ENCODE measurements at regions of chr11 and their contacts with region 1.

Region 1: GRCh38 chr11:125592305-125593112 is at the start of gene STT3A:
- DNase-seq: peak; percentile 97 to 99
- ATAC-seq: peak; percentile 91 to 98 (median 92)
- H3K4me3 ChIP-seq: peak within 1 kb of the TSS; percentile 81
- H3K4me3 Mint-ChIP-seq: peak within 1 kb of the TSS; percentile 99
- H3K27ac ChIP-seq: peak within 1 kb of the TSS; percentile 97
- H3K27ac Mint-ChIP-seq: peak within 1 kb of the TSS; percentile 99 to 100
- H3K4me1 ChIP-seq: peaks cover 20% of the 10 kb centered on the region
- H3K4me1 Mint-ChIP-seq: peaks cover 41 to 52% of the 10 kb centered on the region in 2 donors
- H3K27me3 ChIP-seq: no peaks in the 10 kb centered on the region
- H3K27me3 Mint-ChIP-seq: no peaks in the 10 kb centered on the region
- CTCF ChIP-seq: no peak
- total RNA-seq, gene STT3A: 56.7 to 63.5 (median 62.6) TPM

Region 2: DNA sequence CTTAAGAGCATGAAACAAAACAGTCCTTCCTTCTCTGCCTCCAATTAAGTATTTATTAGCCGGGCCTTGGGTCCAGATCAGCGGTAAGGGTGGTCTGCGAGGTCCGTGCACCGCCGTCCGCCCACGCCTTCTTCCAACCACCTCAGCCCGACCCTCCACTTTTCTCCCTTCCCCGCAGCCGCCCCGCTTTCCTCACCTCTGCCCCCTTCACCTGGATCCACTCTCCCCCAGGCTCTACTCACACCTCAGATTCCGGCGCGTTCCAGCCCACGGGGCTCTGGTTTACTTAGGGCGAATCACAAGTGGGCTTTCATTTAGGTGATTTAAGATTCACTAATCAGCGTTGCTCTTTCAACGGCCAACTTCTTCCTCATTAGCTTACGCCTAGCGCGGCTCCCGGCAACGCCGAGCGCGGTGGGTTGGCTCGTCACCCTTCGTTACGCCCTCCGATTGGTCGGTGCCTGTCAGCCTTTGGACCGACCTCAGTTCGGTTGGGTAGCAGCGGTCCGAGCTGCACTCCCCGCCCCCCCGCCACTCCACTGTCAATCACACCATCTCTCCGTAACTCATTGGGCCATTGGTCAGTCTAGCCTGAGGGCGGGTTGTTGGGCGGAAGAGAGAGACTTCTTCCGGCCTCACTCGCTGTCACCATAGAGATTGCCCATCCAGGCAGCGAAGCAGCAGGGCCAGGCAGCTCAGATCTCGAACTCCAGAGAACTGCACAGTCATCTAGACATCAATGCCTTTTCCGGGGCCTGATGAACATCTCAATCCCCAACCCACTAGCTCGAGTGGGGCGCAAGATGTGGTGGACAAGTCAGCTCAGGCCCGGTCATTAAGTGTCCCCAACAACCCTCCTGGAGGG is 480.9 kb before region 1 on chr11 and contains the start of gene TMEM218:
- intact Hi-C with region 1: loop called (anchors 10 kb)
- DNase-seq: peak; percentile 90 to 98
- ATAC-seq: peak; percentile 92 to 98 (median 95)
- H3K4me3 ChIP-seq: peak within 1 kb of the TSS; percentile 82
- H3K4me3 Mint-ChIP-seq: peak within 1 kb of the TSS; percentile 99
- H3K27ac ChIP-seq: peak within 1 kb of the TSS; percentile 84
- H3K27ac Mint-ChIP-seq: peak within 1 kb of the TSS; percentile 95 to 99
- H3K4me1 ChIP-seq: peaks cover 14% of the 10 kb centered on the region
- H3K4me1 Mint-ChIP-seq: peaks cover 17 to 23% of the 10 kb centered on the region in 2 donors
- H3K27me3 ChIP-seq: no peaks in the 10 kb centered on the region
- H3K27me3 Mint-ChIP-seq: peaks cover 0 to 9% of the 10 kb centered on the region in 2 donors
- CTCF ChIP-seq: no peak
- total RNA-seq, gene TMEM218: 10.0 to 14.2 (median 12.1) TPM

Region 3: DNA sequence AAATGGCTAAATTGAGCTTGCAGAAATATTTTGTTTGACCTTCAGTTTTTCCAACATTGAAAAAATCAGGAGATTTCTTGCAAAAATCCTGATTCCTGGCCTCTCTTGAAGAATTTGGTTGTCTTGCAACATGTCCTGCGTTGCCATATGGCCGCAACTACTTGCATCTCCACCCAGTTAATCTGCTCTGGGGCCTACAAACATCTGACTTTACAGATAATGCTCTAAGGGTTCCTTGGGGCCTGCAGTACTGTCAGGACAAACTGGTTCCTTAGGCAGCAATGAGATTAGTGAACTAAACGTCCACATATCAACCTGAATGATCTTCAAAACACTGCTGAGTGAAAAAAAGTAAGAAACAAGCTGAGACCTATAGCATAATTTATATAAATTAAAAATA is 59.8 kb before region 1 on chr11:
- intact Hi-C with region 1: no loop called
- DNase-seq: no peak
- ATAC-seq: no peak
- H3K4me3 ChIP-seq: no peak overlapping the region
- H3K4me3 Mint-ChIP-seq: no peak overlapping the region
- H3K27ac ChIP-seq: no peak overlapping the region
- H3K27ac Mint-ChIP-seq: no peak overlapping the region
- H3K4me1 ChIP-seq: no peaks in the 10 kb centered on the region
- H3K4me1 Mint-ChIP-seq: no peaks in the 10 kb centered on the region
- H3K27me3 ChIP-seq: no peaks in the 10 kb centered on the region
- H3K27me3 Mint-ChIP-seq: no peaks in the 10 kb centered on the region
- CTCF ChIP-seq: no peak

Region 4: DNA sequence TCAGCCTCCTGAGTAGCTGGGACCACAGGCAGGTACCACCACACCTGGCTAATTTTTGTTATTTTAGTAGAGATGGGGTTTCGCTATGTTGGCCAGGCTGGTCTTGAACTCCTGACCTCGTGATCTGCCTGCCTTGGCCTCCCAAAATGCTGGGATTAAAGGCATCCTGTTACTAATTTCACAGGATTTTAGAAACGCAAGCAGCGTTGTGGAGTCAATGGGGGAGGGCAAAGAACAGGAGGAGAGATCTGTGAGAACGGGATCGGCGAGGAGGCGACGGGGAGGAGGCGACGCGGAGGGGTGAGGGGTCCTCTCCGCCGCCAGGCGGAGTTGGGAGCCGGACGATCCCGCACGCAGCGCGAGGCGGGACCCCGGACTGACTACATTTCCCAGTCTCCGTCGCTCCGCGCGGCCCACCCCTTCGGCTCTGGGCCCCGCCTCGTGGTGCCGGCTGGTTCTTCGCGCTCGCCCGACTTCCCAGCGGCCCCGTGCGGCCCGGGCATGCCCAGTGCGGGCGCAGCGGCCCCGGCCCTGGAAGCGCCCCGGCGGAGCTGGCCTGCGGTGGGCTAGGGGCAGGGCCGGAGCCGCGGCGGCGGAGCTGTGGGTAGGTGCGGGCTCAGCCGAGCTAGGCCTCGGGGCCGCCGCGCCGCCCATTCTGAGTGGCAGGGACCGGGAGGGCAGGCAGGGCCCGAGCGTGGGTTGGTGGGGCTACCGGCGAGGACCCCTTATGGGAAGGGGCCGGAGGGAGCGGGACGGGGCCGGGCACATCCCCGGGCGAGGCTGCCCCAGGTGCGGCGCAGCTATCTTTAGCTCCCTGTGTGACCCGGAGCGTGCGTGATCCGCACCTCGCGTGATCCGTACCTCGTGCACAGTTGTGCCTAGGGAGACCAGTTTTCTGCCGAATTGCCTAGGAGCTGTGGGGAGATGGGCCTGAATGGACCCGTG is 23.3 kb before region 1 on chr11 and contains the start of gene EI24:
- intact Hi-C with region 1: loop called (anchors 1 kb)
- DNase-seq: peak; percentile 77 to 94
- ATAC-seq: peak; percentile 94 to 98 (median 95)
- H3K4me3 ChIP-seq: peak within 1 kb of the TSS; percentile 82
- H3K4me3 Mint-ChIP-seq: peak within 1 kb of the TSS; percentile 89
- H3K27ac ChIP-seq: peak within 1 kb of the TSS; percentile 76
- H3K27ac Mint-ChIP-seq: peak within 1 kb of the TSS; percentile 87 to 95
- H3K4me1 ChIP-seq: peaks cover 19% of the 10 kb centered on the region
- H3K4me1 Mint-ChIP-seq: peaks cover 18 to 21% of the 10 kb centered on the region in 2 donors
- H3K27me3 ChIP-seq: no peaks in the 10 kb centered on the region
- H3K27me3 Mint-ChIP-seq: no peaks in the 10 kb centered on the region
- CTCF ChIP-seq: peak; percentile 55
- total RNA-seq, gene EI24: 19.5 to 30.0 (median 20.2) TPM

Region 5: GRCh38 chr11:125579811-125580210 is 12.7 kb before region 1 on chr11:
- intact Hi-C with region 1: no loop called
- DNase-seq: no peak
- ATAC-seq: no peak
- H3K4me3 ChIP-seq: no peak overlapping the region
- H3K4me3 Mint-ChIP-seq: no peak overlapping the region
- H3K27ac ChIP-seq: no peak overlapping the region
- H3K27ac Mint-ChIP-seq: no peak overlapping the region
- H3K4me1 ChIP-seq: no peaks in the 10 kb centered on the region
- H3K4me1 Mint-ChIP-seq: no peaks in the 10 kb centered on the region
- H3K27me3 ChIP-seq: no peaks in the 10 kb centered on the region
- H3K27me3 Mint-ChIP-seq: no peaks in the 10 kb centered on the region
- CTCF ChIP-seq: no peak

Region 6: DNA sequence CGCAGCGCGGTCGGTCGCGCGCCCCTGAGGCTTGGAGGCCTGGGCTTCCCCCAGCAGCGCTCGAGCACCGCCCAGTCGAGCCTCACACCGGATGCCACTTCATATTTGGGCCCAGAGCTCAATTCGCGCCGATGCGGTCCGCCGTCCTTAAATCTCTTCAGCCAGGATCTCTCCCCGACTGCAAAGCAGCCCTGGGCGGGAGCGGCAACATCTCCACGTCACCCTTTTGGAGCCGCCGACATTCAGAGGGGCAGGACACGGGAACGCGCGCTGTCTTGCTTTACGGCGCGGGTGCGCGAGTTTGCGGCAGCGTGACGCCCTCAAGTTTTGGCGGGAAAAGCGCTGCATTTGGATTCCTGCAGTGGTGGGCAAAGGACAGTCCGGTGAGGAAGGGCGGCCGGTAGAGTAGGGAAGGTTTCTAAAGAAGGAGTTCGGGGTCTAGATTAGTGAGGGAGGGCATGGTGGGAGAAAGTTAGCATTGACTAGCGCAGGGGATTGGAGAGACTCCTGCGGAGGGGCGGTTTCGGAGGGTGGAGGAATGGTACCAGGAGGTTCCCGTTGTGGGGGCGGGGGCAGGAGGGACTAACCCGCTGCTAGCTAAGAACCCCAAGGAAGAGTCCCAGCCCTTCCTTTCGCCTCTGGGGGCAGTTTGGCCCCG is 33.2 kb after region 1 on chr11:
- intact Hi-C with region 1: loop called (anchors 1 kb)
- DNase-seq: peak; percentile 80 to 89
- ATAC-seq: peak; percentile 95 to 96 (median 96)
- H3K4me3 ChIP-seq: peak overlapping the region; percentile 93
- H3K4me3 Mint-ChIP-seq: peak overlapping the region; percentile 97
- H3K27ac ChIP-seq: peak overlapping the region; percentile 98
- H3K27ac Mint-ChIP-seq: peak overlapping the region; percentile 97 to 98
- H3K4me1 ChIP-seq: peaks cover 18% of the 10 kb centered on the region
- H3K4me1 Mint-ChIP-seq: peaks cover 19 to 20% of the 10 kb centered on the region in 2 donors
- H3K27me3 ChIP-seq: no peaks in the 10 kb centered on the region
- H3K27me3 Mint-ChIP-seq: no peaks in the 10 kb centered on the region
- CTCF ChIP-seq: no peak